IMR-90 (cell line): ENCODE measurements at regions of chr7 and their contacts with region 1.

Region 1: DNA sequence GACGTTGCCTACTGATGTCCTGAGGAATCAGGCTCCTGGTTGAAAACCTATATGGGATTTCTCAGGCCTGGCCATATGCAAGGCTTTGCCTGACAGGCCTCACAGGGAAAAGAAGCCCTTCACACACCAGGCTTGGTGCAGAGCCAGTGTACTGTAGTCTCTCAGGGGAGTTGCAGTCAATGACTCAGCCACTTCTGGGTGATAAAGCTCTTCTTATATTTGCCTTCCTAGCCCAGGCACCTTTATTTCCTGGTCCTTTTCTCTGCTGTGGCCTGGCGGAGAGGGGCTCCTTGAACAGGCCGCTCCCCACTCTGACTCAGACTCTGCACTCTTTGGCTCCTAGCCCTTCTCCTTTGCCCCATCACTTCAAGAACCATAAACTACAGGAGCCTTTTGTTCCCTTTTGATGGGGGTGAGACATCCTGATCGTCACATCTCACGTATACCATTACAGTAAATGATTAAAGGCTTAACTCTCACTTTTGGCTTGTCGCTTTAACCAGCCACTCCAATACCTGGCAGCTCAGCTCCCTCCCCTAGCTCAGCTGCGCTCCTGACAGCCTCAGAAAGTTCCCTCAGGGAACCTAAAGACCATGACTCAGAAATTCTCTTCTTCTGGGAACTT is 33.5 kb downstream of the DPY19L1 start:
- DNase-seq: peak; percentile 90
- ATAC-seq: peak; percentile 78
- H3K4me3 ChIP-seq: no peak overlapping the region
- H3K27ac ChIP-seq: peak overlapping the region; percentile 67
- H3K4me1 ChIP-seq: peaks cover 10% of the 10 kb centered on the region
- H3K27me3 ChIP-seq: no peaks in the 10 kb centered on the region
- CTCF ChIP-seq: no peak
- POLR2A ChIP-seq: no peak
- RAD21 ChIP-seq: no peak

Region 2: DNA sequence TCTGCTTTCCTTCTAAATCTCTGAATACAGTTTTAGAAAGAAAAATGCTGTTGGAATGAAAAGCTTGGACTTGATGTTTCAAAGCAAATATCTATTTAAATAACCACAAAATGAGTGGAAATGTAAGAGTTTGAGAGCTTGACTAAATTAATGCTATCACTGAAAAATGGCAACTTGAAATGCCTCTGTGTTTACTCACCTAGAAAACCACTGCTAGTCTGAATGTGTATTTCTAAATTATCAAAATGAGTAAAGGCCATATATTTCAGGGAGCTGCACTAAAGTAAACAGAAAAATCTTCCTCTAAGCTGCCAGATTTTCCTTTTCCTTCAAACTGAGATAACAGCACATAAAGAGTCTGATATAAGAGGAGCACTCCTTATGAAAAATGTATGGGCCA is 54.4 kb before region 1 on chr7:
- CTCF ChIA-PET with region 1: no interaction called
- POLR2A ChIA-PET with region 1: no interaction called
- dilution Hi-C with region 1: no loop called
- in situ Hi-C with region 1: no loop called
- intact Hi-C with region 1: loop called (anchors 10 kb)
- DNase-seq: peak; percentile 54
- ATAC-seq: peak; percentile 78
- H3K4me3 ChIP-seq: no peak overlapping the region
- H3K27ac ChIP-seq: no peak overlapping the region
- H3K4me1 ChIP-seq: no peaks in the 10 kb centered on the region
- H3K27me3 ChIP-seq: no peaks in the 10 kb centered on the region
- CTCF ChIP-seq: no peak
- POLR2A ChIP-seq: no peak
- RAD21 ChIP-seq: no peak